BJ (cell line): ENCODE measurements at regions of chr22 and their contacts with region 1.

Region 1: DNA sequence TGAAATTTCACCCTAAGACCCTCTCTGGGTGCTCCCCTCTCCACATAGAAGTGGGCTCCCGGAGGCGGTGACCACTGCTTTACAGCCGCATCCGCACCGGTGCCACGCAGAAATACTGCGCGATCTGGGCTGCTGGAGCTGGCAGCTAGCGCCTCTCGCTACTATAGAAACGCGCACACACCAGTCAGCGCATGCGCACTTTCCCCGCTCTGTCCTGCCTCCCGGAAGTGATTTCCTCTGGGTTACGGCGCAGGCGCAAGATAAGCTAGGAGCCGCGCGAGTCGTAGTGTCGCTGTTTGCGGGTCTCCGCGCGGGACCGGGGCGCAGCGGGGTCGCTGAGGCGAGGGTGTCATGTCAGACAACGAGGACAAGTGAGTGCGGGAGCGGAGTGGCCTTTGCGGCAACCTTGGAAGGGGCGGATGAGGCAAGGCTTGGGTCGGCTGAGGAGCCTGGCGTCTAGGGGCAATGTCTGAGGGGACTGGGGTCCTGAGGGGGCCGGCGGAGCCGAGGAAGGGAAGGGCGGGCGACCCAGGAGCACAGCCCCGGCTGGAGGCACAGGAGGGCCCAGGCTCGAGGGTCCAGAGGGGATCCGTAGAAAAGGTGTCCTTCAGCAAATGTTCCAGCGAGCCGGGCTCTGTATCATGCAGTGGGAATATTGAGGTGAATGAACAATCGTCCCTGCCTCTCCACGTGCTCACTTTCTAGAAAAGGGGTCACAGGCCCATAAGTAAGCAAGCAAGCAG is at the starts of genes C22orf23 and POLR2F:
- DNase-seq: peak; percentile 67
- H3K4me3 ChIP-seq: peak within 1 kb of the TSS; percentile 100
- H3K27me3 ChIP-seq: no peaks in the 10 kb centered on the region
- CTCF ChIP-seq: no peak
- polyA plus RNA-seq, gene C22orf23: 0.38 and 0.42 TPM in 2 replicates
- polyA plus RNA-seq, gene POLR2F: 86.2 and 92.1 TPM in 2 replicates

Region 2: GRCh38 chr22:37768273-37768672 is 185.3 kb before region 1 on chr22:
- CTCF ChIA-PET with region 1: no interaction called
- POLR2A ChIA-PET with region 1: no interaction called
- DNase-seq: no peak
- H3K4me3 ChIP-seq: no peak overlapping the region
- H3K27me3 ChIP-seq: no peaks in the 10 kb centered on the region
- CTCF ChIP-seq: peak; percentile 22; the same call in 1 of the 2 replicates

Region 3: GRCh38 chr22:37807410-37808293 is 146.0 kb before region 1 on chr22 and contains the start of gene GCAT:
- CTCF ChIA-PET with region 1: no interaction called
- POLR2A ChIA-PET with region 1: interaction called, 16 read pairs
- DNase-seq: peak; percentile 84
- H3K4me3 ChIP-seq: peak within 1 kb of the TSS; percentile 61
- H3K27me3 ChIP-seq: no peaks in the 10 kb centered on the region
- CTCF ChIP-seq: no peak
- polyA plus RNA-seq, gene GCAT: 12.6 and 24.9 TPM in 2 replicates

Region 4: DNA sequence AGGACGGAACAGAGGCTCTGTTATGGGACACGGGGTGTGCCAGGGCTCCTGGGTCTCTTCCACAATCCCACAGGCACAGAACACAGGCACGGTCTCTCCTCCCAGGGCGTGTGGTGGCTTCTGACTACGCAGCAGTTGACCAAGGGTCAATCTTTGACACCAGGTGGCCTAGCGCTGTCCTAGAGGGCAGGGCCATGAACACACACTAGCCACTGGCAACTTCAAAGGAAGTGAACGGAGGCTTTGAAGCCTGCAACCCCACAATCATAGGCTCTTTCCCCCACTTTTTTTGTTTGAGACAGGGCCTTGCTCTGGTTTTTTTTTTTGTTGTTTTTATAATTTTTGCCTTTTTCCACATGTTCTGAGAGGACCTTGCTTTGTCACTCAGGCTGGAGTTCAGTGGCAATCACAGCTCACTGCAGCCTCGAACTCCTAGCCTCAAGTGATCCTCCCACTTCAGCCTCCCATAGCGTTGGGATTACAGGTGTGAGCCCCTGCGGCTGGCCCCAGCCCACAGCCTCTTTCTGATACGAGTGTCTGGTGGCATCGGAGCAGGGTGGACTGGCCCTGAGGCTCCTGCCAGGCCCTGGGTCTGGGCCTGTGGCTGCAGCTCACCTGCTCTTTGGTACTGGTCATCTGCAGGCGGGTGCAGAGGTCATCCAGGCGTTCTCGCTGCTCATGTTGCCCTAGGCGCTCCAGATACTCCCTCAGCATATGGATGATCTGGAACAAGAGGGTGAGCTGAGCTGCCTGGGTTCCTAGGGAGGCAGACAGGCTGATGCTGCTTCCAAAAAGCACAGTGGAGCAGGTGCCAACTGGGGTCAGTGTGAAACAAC is 121.4 kb before region 1 on chr22:
- CTCF ChIA-PET with region 1: no interaction called
- POLR2A ChIA-PET with region 1: no interaction called
- DNase-seq: no peak
- H3K4me3 ChIP-seq: no peak overlapping the region
- H3K27me3 ChIP-seq: no peaks in the 10 kb centered on the region
- CTCF ChIP-seq: no peak

Region 5: GRCh38 chr22:37965940-37966664 is 12.5 kb after region 1 on chr22:
- CTCF ChIA-PET with region 1: interaction called, 14 read pairs
- POLR2A ChIA-PET with region 1: interaction called, 9 read pairs
- DNase-seq: no peak
- H3K4me3 ChIP-seq: no peak overlapping the region
- H3K27me3 ChIP-seq: no peaks in the 10 kb centered on the region
- CTCF ChIP-seq: no peak

Region 6: GRCh38 chr22:38034274-38034882 is 80.8 kb after region 1 on chr22:
- CTCF ChIA-PET with region 1: interaction called, 4 read pairs
- POLR2A ChIA-PET with region 1: interaction called, 17 read pairs
- DNase-seq: peak; percentile 32
- H3K4me3 ChIP-seq: no peak overlapping the region
- H3K27me3 ChIP-seq: no peaks in the 10 kb centered on the region
- CTCF ChIP-seq: no peak